ENCODE measurements at regions of chr4 and their contacts with region 1.

Region 1: DNA sequence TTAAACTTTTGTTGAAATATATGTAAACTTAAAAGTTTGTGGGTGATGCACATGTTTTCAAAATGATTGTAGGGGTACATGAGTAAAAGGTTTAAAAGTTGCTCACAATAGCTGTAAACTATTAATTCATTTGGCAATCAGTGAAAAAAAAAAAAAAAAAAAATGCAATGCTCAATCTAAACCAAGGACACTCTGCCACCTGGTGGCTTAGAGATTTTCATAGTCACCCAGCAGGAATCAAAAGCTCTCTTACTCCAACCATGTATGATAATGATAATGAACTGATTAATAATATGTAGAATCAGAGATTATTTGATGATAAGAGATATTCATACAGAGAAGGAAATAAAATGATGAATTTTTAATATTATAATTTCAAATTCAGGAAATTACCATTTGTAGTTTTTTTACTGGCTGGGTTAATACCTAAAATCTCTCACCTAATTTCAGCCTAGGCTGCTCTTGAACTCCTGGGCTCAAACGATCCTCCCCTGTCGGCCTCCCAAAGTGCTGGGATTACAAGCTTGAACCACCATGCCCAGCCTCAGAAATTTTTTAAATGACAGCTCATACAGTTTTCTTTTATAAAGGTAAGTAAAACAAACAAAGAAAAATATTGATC is 46.9 kb upstream of the SLC25A4 start:
- DNase-seq: no peak
- H3K4me3 ChIP-seq: no peak overlapping the region
- H3K27ac ChIP-seq: no peak overlapping the region
- H3K27me3 ChIP-seq: peaks cover 18% of the 10 kb centered on the region
- CTCF ChIP-seq: peak; percentile 62

Region 2: GRCh38 chr4:184924516-184924915 is 171.6 kb before region 1 on chr4:
- CTCF ChIA-PET with region 1: no interaction called
- POLR2A ChIA-PET with region 1: no interaction called
- DNase-seq: no peak
- H3K4me3 ChIP-seq: no peak overlapping the region
- H3K27ac ChIP-seq: no peak overlapping the region
- H3K27me3 ChIP-seq: no peaks in the 10 kb centered on the region
- CTCF ChIP-seq: no peak

Region 3: GRCh38 chr4:185005216-185005819 is 90.8 kb before region 1 on chr4:
- CTCF ChIA-PET with region 1: interaction called, 23 read pairs
- POLR2A ChIA-PET with region 1: no interaction called
- DNase-seq: peak; percentile 36
- H3K4me3 ChIP-seq: peak overlapping the region; percentile 39; the same call in 1 of the 2 replicates
- H3K27ac ChIP-seq: no peak overlapping the region
- H3K27me3 ChIP-seq: peaks cover 14% of the 10 kb centered on the region
- CTCF ChIP-seq: peak; percentile 96

Region 4: GRCh38 chr4:185039508-185040273 is 56.5 kb before region 1 on chr4:
- CTCF ChIA-PET with region 1: interaction called, 118 read pairs
- POLR2A ChIA-PET with region 1: no interaction called
- DNase-seq: peak; percentile 37
- H3K4me3 ChIP-seq: peak overlapping the region; percentile 38
- H3K27ac ChIP-seq: no peak overlapping the region
- H3K27me3 ChIP-seq: peaks cover 7% of the 10 kb centered on the region
- CTCF ChIP-seq: peak; percentile 90

Region 5: GRCh38 chr4:185108669-185109068 is 12.5 kb after region 1 on chr4:
- CTCF ChIA-PET with region 1: interaction called, 23 read pairs
- POLR2A ChIA-PET with region 1: no interaction called
- DNase-seq: no peak
- H3K4me3 ChIP-seq: no peak overlapping the region
- H3K27ac ChIP-seq: no peak overlapping the region
- H3K27me3 ChIP-seq: no peaks in the 10 kb centered on the region
- CTCF ChIP-seq: no peak

Region 6: GRCh38 chr4:185122681-185123345 is 26.7 kb after region 1 on chr4:
- CTCF ChIA-PET with region 1: interaction called, 13 read pairs
- POLR2A ChIA-PET with region 1: no interaction called
- DNase-seq: no peak
- H3K4me3 ChIP-seq: no peak overlapping the region
- H3K27ac ChIP-seq: no peak overlapping the region
- H3K27me3 ChIP-seq: peaks cover 5% of the 10 kb centered on the region
- CTCF ChIP-seq: no peak

Measured in AG04450 (cell line).